ENCODE measurements at regions of chr9 and their contacts with region 1.

Region 1: GRCh38 chr9:117644133-117644931 is 59.9 kb upstream of the TLR4 start:
- DNase-seq: peak; percentile 21
- ATAC-seq: peak; percentile 89
- H3K4me3 ChIP-seq: no peak overlapping the region
- H3K27ac ChIP-seq: no peak overlapping the region
- H3K4me1 ChIP-seq: peaks cover 5% of the 10 kb centered on the region; the same call in 1 of the 2 replicates
- H3K27me3 ChIP-seq: no peaks in the 10 kb centered on the region
- CTCF ChIP-seq: peak; percentile 91 to 99 (median 97)
- EP300 ChIP-seq: no peak
- POLR2A ChIP-seq: no peak
- RAD21 ChIP-seq: peak; percentile 97

Region 2: DNA sequence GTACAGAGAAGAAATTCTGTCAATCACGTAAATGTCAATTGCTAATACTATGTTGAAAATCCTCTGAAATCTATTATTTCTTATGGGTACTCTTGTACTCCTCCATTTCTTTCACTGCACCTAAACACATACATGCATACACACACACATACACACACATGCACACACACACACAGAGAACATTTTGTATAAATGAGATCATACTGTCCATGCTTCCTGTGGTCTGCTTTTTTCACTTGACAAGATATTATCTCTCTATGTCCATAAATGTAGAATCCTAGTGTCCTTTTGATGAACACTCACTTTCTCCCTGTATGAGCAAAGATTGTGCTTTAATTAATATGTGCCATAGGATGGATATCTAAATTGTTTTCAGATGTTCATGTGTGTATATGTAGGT is 27.1 kb after region 1 on chr9:
- CTCF ChIA-PET with region 1: no interaction called
- POLR2A ChIA-PET with region 1: no interaction called
- RAD21 ChIA-PET with region 1: no interaction called
- SMC1A ChIA-PET with region 1: no interaction called
- in situ Hi-C with region 1: no loop called
- intact Hi-C with region 1: no loop called
- DNase-seq: no peak
- ATAC-seq: no peak
- H3K4me3 ChIP-seq: no peak overlapping the region
- H3K27ac ChIP-seq: no peak overlapping the region
- H3K4me1 ChIP-seq: no peaks in the 10 kb centered on the region
- H3K27me3 ChIP-seq: no peaks in the 10 kb centered on the region
- CTCF ChIP-seq: no peak
- EP300 ChIP-seq: no peak
- POLR2A ChIP-seq: no peak
- RAD21 ChIP-seq: no peak

Region 3: GRCh38 chr9:117782931-117783788 is 138.8 kb after region 1 on chr9:
- CTCF ChIA-PET with region 1: interaction called, 3 read pairs
- POLR2A ChIA-PET with region 1: no interaction called
- RAD21 ChIA-PET with region 1: no interaction called
- SMC1A ChIA-PET with region 1: no interaction called
- in situ Hi-C with region 1: no loop called
- intact Hi-C with region 1: loop called (anchors 1 kb)
- DNase-seq: peak; percentile 31
- ATAC-seq: peak; percentile 91
- H3K4me3 ChIP-seq: no peak overlapping the region; the same call in 1 of the 2 replicates
- H3K27ac ChIP-seq: no peak overlapping the region
- H3K4me1 ChIP-seq: peaks cover 6% of the 10 kb centered on the region
- H3K27me3 ChIP-seq: no peaks in the 10 kb centered on the region
- CTCF ChIP-seq: peak; percentile 72 to 82 (median 78)
- EP300 ChIP-seq: peak in 1 of 2 experiments; percentile 5; a peak in 1 of 4 replicates
- POLR2A ChIP-seq: no peak
- RAD21 ChIP-seq: peak; percentile 80

Region 4: GRCh38 chr9:118170032-118170955 is 526.0 kb after region 1 on chr9:
- CTCF ChIA-PET with region 1: no interaction called
- POLR2A ChIA-PET with region 1: no interaction called
- RAD21 ChIA-PET with region 1: no interaction called
- SMC1A ChIA-PET with region 1: no interaction called
- in situ Hi-C with region 1: no loop called
- intact Hi-C with region 1: loop called (anchors 2 kb)
- DNase-seq: no peak
- ATAC-seq: peak; percentile 68
- H3K4me3 ChIP-seq: no peak overlapping the region
- H3K27ac ChIP-seq: no peak overlapping the region
- H3K4me1 ChIP-seq: no peaks in the 10 kb centered on the region
- H3K27me3 ChIP-seq: no peaks in the 10 kb centered on the region
- CTCF ChIP-seq: peak; percentile 50 to 65 (median 63)
- EP300 ChIP-seq: no peak
- POLR2A ChIP-seq: no peak
- RAD21 ChIP-seq: peak; percentile 46

Region 5: GRCh38 chr9:119289740-119290433 is 1645.6 kb after region 1 on chr9:
- CTCF ChIA-PET with region 1: interaction called, 3 read pairs
- POLR2A ChIA-PET with region 1: no interaction called
- RAD21 ChIA-PET with region 1: no interaction called
- SMC1A ChIA-PET with region 1: interaction called, 3 read pairs
- in situ Hi-C with region 1: no loop called
- intact Hi-C with region 1: loop called (anchors 1 kb)
- DNase-seq: no peak
- ATAC-seq: peak; percentile 84
- H3K4me3 ChIP-seq: no peak overlapping the region
- H3K27ac ChIP-seq: no peak overlapping the region
- H3K4me1 ChIP-seq: no peaks in the 10 kb centered on the region
- H3K27me3 ChIP-seq: no peaks in the 10 kb centered on the region
- CTCF ChIP-seq: peak; percentile 68 to 79 (median 74); a peak in 5 of 6 replicates
- EP300 ChIP-seq: no peak
- POLR2A ChIP-seq: no peak
- RAD21 ChIP-seq: peak; percentile 77